ENCODE measurements at regions of chr22 and their contacts with region 1.

Region 1: DNA sequence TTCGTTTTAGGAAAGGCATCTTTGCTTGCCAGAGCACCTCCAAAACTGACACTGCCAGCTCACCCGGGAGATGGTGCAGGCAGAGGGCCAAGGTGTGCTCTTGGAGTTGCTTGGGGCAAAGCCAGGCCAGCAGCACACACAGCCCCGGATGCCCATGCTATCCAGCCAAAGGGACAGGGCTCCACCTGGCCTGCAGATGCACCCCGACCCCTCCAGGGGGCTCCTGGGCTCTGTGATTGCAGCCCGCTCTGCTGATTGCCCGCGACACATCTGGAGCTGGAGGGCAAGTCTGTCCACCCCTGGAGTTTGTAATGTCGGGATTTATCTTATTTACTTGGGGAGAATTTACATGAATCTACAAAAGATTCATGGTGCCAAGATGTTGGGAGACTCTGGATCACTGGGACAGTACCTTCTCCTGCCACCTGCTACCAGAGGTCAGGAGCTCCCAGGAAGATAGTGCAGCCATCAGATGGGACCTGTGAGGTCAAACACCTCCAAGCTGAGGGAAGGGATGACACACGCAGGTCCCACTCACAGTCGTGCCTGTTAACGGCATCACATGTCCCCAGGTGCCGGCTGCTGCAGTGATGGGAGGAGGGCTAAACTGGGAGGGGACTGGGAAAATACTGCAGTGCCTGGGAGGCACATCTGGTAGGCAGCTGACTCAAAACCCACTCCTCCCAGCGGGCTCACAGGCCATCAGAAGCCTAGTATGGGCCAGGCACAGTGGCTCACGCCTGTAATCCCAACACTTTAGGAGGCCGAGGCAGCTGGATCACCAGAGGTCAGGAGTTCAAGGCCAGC is 17.2 kb downstream of the CBX7 start:
- DNase-seq: no peak
- H3K4me3 ChIP-seq: no peak overlapping the region
- H3K27me3 ChIP-seq: no peaks in the 10 kb centered on the region
- CTCF ChIP-seq: peak; percentile 68

Region 2: DNA sequence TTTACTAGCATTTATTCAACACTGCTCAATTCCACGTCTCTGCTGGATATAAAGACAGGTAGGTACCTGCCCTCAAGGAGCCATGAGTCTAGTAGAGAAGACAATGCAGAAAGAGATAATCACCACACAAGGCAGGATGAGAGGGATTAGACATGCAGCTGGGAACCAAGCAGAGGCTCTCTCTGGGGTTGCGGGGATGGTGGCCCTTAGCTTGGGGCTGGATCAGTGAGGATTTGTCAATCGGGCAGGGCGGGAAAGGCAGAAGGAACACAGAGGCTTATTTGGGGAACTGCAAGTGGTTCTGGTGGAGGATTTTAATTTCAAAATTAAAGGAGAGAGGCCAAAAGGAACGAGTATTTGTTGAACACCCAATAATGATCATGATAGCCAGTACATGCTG is 556.8 kb before region 1 on chr22:
- CTCF ChIA-PET with region 1: no interaction called
- POLR2A ChIA-PET with region 1: no interaction called
- DNase-seq: no peak
- H3K4me3 ChIP-seq: no peak overlapping the region
- H3K27me3 ChIP-seq: no peaks in the 10 kb centered on the region
- CTCF ChIP-seq: no peak

Region 3: GRCh38 chr22:39041908-39042307 is 93.4 kb before region 1 on chr22:
- CTCF ChIA-PET with region 1: no interaction called
- POLR2A ChIA-PET with region 1: interaction called, 16 read pairs
- DNase-seq: no peak
- H3K4me3 ChIP-seq: no peak overlapping the region
- H3K27me3 ChIP-seq: no peaks in the 10 kb centered on the region
- CTCF ChIP-seq: no peak

Region 4: GRCh38 chr22:39055658-39056057 is 79.6 kb before region 1 on chr22:
- CTCF ChIA-PET with region 1: no interaction called
- POLR2A ChIA-PET with region 1: no interaction called
- DNase-seq: no peak
- H3K4me3 ChIP-seq: no peak overlapping the region
- H3K27me3 ChIP-seq: peaks cover 6% of the 10 kb centered on the region
- CTCF ChIP-seq: no peak

Region 5: DNA sequence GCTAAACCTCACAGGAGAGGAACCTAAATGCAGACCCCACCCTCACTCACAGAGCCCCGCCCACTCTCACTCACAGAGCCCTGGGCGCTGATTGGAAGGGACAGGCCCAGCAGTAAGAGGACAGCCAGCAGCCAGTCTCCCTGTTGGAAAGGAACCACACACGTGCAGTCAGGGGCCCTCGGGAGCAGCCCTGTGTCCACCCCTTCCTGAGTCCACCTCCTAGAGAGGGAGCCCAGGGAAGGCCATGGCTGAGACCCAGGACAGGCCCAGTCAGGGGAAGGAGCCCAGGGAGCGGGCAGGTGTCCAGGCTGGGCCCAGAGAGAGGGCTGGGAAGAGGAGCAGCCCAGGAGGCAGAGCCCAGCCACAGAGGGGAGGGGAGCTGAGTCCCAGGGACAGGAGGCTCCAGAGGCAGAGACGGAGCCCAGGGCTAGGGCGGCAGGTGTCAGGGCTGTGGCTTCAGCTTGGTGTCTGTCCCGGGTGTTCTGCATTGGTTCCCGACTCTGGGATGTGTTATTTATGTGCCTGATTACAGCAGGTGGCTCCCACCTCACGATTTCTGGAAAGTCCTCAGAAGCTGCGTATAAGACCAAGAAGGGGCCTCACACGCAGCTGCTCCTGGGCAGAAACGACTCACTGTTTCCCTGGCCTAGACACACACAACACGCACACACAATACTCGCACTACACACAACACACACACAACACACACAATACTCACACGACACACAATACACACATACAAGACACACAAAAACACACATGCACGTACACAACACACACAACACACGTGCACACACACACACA is 47.2 kb before region 1 on chr22:
- CTCF ChIA-PET with region 1: no interaction called
- POLR2A ChIA-PET with region 1: no interaction called
- DNase-seq: no peak
- H3K4me3 ChIP-seq: no peak overlapping the region
- H3K27me3 ChIP-seq: peaks cover 4% of the 10 kb centered on the region
- CTCF ChIP-seq: no peak

Region 6: GRCh38 chr22:39374191-39374590 is 238.9 kb after region 1 on chr22:
- CTCF ChIA-PET with region 1: no interaction called
- POLR2A ChIA-PET with region 1: no interaction called
- DNase-seq: no peak
- H3K4me3 ChIP-seq: no peak overlapping the region
- H3K27me3 ChIP-seq: no peaks in the 10 kb centered on the region; the same call in 1 of the 2 replicates
- CTCF ChIP-seq: no peak